ENCODE measurements at regions of chr11 and their contacts with region 1.

Region 1: GRCh38 chr11:38402063-38402462 is 1804.0 kb upstream of the RAG2 start:
- DNase-seq: no peak
- H3K4me3 ChIP-seq: no peak overlapping the region
- H3K4me3 Mint-ChIP-seq: no peak overlapping the region
- H3K27ac Mint-ChIP-seq: no peak overlapping the region
- H3K4me1 ChIP-seq: no peaks in the 10 kb centered on the region
- H3K4me1 Mint-ChIP-seq: no peaks in the 10 kb centered on the region
- H3K27me3 ChIP-seq: no peaks in the 10 kb centered on the region
- H3K27me3 Mint-ChIP-seq: no peaks in the 10 kb centered on the region
- CTCF ChIP-seq: no peak

Region 2: GRCh38 chr11:38315141-38315540 is 86.9 kb before region 1 on chr11:
- CTCF ChIA-PET with region 1: no interaction called
- POLR2A ChIA-PET with region 1: no interaction called
- intact Hi-C with region 1: loop called (anchors 10 kb)
- DNase-seq: no peak
- H3K4me3 ChIP-seq: no peak overlapping the region
- H3K4me3 Mint-ChIP-seq: no peak overlapping the region
- H3K27ac Mint-ChIP-seq: no peak overlapping the region
- H3K4me1 ChIP-seq: no peaks in the 10 kb centered on the region
- H3K4me1 Mint-ChIP-seq: no peaks in the 10 kb centered on the region
- H3K27me3 ChIP-seq: no peaks in the 10 kb centered on the region
- H3K27me3 Mint-ChIP-seq: no peaks in the 10 kb centered on the region
- CTCF ChIP-seq: no peak

Region 3: GRCh38 chr11:38710262-38710661 is 308.2 kb after region 1 on chr11:
- CTCF ChIA-PET with region 1: no interaction called
- POLR2A ChIA-PET with region 1: no interaction called
- intact Hi-C with region 1: no loop called
- DNase-seq: no peak
- H3K4me3 ChIP-seq: no peak overlapping the region
- H3K4me3 Mint-ChIP-seq: no peak overlapping the region
- H3K27ac Mint-ChIP-seq: no peak overlapping the region
- H3K4me1 ChIP-seq: no peaks in the 10 kb centered on the region
- H3K4me1 Mint-ChIP-seq: no peaks in the 10 kb centered on the region
- H3K27me3 ChIP-seq: no peaks in the 10 kb centered on the region
- H3K27me3 Mint-ChIP-seq: no peaks in the 10 kb centered on the region
- CTCF ChIP-seq: no peak

Measured in Caco-2 (cell line).